ENCODE measurements at regions of chr1 and their contacts with region 1.

Region 1: GRCh38 chr1:28518000-28518744 is 12.3 kb downstream of the RCC1 start:
- DNase-seq: peak; percentile 91
- H3K4me3 ChIP-seq: peak overlapping the region; percentile 52 to 73 (median 57)
- H3K27ac ChIP-seq: peak overlapping the region; percentile 46
- H3K4me1 ChIP-seq: peaks cover 14% of the 10 kb centered on the region
- H3K27me3 ChIP-seq: no peaks in the 10 kb centered on the region
- CTCF ChIP-seq: peak; percentile 94 to 98
- POLR2A ChIP-seq: peak; percentile 87

Region 2: GRCh38 chr1:28552758-28553663 is 34.8 kb after region 1 on chr1 and contains the start of gene TRNAU1AP:
- CTCF ChIA-PET with region 1: interaction called, 5 read pairs
- POLR2A ChIA-PET with region 1: interaction called, 4 read pairs
- dilution Hi-C with region 1: no loop called
- intact Hi-C with region 1: loop called (anchors 2 kb)
- DNase-seq: peak; percentile 98
- H3K4me3 ChIP-seq: peak within 1 kb of the TSS; percentile 79 to 86 (median 85)
- H3K27ac ChIP-seq: peak within 1 kb of the TSS; percentile 39
- H3K4me1 ChIP-seq: peaks cover 12% of the 10 kb centered on the region
- H3K27me3 ChIP-seq: no peaks in the 10 kb centered on the region
- CTCF ChIP-seq: no peak
- POLR2A ChIP-seq: peak; percentile 86
- total RNA-seq, gene TRNAU1AP: 46.2 and 49.0 TPM in 2 replicates

Measured in endothelial cell of umbilical vein (primary cell).